Caco-2 (cell line): ENCODE measurements at regions of chr16 and their contacts with region 1.

Region 1: GRCh38 chr16:63663152-63663551 is 1458.7 kb downstream of the CDH11 start:
- DNase-seq: no peak
- H3K4me3 ChIP-seq: no peak overlapping the region
- H3K4me3 Mint-ChIP-seq: no peak overlapping the region
- H3K27ac Mint-ChIP-seq: no peak overlapping the region
- H3K4me1 ChIP-seq: no peaks in the 10 kb centered on the region
- H3K4me1 Mint-ChIP-seq: no peaks in the 10 kb centered on the region
- H3K27me3 ChIP-seq: no peaks in the 10 kb centered on the region
- H3K27me3 Mint-ChIP-seq: no peaks in the 10 kb centered on the region
- CTCF ChIP-seq: no peak

Region 2: GRCh38 chr16:63617047-63617989 is 45.8 kb before region 1 on chr16:
- CTCF ChIA-PET with region 1: no interaction called
- POLR2A ChIA-PET with region 1: no interaction called
- intact Hi-C with region 1: loop called (anchors 10 kb)
- DNase-seq: no peak
- H3K4me3 ChIP-seq: no peak overlapping the region
- H3K4me3 Mint-ChIP-seq: no peak overlapping the region
- H3K27ac Mint-ChIP-seq: no peak overlapping the region
- H3K4me1 ChIP-seq: no peaks in the 10 kb centered on the region
- H3K4me1 Mint-ChIP-seq: no peaks in the 10 kb centered on the region
- H3K27me3 ChIP-seq: no peaks in the 10 kb centered on the region; the same call in 1 of the 2 replicates
- H3K27me3 Mint-ChIP-seq: no peaks in the 10 kb centered on the region
- CTCF ChIP-seq: no peak

Region 3: DNA sequence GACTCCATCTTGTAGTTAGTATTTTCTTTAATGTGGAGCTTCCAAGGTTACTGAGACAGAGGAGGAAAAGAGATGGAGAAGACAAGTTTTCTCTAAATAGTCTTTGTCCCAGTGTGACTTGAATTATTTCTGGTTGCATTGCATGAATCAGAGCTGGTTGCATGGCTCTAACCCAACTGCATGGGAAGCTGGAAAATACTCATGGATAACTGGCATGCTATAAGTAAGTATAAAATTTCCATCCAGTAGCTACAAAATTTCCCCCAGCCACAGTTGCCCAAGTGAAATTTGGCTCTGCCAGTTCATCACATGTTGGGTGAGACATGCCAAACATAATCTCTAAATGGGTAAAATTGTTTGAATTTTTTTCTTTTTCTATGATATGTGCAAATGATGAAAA is 297.2 kb after region 1 on chr16:
- CTCF ChIA-PET with region 1: no interaction called
- POLR2A ChIA-PET with region 1: no interaction called
- intact Hi-C with region 1: no loop called
- DNase-seq: no peak
- H3K4me3 ChIP-seq: no peak overlapping the region
- H3K4me3 Mint-ChIP-seq: no peak overlapping the region
- H3K27ac Mint-ChIP-seq: no peak overlapping the region
- H3K4me1 ChIP-seq: no peaks in the 10 kb centered on the region
- H3K4me1 Mint-ChIP-seq: no peaks in the 10 kb centered on the region
- H3K27me3 ChIP-seq: no peaks in the 10 kb centered on the region
- H3K27me3 Mint-ChIP-seq: peaks cover 5% of the 10 kb centered on the region
- CTCF ChIP-seq: no peak